ENCODE measurements at regions of chr1 and their contacts with region 1.

Region 1: DNA sequence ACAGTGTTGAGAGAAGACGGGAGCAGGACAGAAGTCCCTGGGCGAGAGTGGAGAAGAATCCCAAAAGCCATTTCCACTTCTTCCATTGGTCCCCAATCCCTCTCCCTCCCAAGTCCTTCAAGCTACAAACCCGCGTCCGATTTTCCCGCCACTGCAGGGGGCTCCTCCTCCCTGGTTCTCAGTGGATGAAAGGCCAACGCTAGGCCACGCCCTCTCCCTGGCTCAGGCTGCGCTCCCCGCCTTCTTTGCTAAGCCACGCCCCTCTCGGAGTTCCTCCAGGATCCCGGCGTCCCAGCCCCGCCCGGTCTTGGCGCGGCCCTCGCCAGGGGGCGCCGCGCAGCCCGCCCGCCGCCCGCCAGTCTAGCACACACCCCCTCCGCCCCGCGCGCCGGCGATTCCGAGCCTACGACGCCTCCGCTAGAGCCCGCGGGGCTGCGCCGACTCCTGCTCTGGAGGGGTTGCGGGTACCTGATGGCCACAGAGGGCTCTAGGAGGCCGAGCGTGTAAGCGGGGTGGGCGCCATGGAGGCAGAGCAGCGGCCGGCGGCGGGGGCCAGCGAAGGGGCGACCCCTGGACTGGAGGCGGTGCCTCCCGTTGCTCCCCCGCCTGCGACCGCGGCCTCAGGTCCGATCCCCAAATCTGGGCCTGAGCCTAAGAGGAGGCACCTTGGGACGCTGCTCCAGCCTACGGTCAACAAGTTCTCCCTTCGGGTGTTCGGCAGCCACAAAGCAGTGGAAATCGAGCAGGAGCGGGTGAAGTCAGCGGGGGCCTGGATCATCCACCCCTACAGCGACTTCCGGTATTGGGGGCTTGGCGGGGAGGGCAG is at the start of gene HCN3:
- DNase-seq: peak; percentile 93
- ATAC-seq: peak; percentile 72
- H3K4me3 Mint-ChIP-seq: peak within 1 kb of the TSS; percentile 79
- H3K27ac Mint-ChIP-seq: no peak within 1 kb of the TSS
- H3K4me1 Mint-ChIP-seq: peaks cover 36% of the 10 kb centered on the region
- H3K27me3 Mint-ChIP-seq: no peaks in the 10 kb centered on the region
- CTCF ChIP-seq: no peak
- total RNA-seq, gene HCN3: 2.7 TPM in 2 replicates

Region 2: GRCh38 chr1:155208541-155209311 is 68.6 kb before region 1 on chr1 and contains the start of gene MTX1:
- CTCF ChIA-PET with region 1: no interaction called
- POLR2A ChIA-PET with region 1: interaction called, 17 read pairs
- intact Hi-C with region 1: no loop called
- DNase-seq: peak; percentile 85
- ATAC-seq: peak; percentile 81
- H3K4me3 Mint-ChIP-seq: peak within 1 kb of the TSS; percentile 85
- H3K27ac Mint-ChIP-seq: peak within 1 kb of the TSS; percentile 91
- H3K4me1 Mint-ChIP-seq: peaks cover 20% of the 10 kb centered on the region
- H3K27me3 Mint-ChIP-seq: no peaks in the 10 kb centered on the region
- CTCF ChIP-seq: no peak
- total RNA-seq, gene MTX1: 36.7 and 38.2 TPM in 2 replicates

Region 3: DNA sequence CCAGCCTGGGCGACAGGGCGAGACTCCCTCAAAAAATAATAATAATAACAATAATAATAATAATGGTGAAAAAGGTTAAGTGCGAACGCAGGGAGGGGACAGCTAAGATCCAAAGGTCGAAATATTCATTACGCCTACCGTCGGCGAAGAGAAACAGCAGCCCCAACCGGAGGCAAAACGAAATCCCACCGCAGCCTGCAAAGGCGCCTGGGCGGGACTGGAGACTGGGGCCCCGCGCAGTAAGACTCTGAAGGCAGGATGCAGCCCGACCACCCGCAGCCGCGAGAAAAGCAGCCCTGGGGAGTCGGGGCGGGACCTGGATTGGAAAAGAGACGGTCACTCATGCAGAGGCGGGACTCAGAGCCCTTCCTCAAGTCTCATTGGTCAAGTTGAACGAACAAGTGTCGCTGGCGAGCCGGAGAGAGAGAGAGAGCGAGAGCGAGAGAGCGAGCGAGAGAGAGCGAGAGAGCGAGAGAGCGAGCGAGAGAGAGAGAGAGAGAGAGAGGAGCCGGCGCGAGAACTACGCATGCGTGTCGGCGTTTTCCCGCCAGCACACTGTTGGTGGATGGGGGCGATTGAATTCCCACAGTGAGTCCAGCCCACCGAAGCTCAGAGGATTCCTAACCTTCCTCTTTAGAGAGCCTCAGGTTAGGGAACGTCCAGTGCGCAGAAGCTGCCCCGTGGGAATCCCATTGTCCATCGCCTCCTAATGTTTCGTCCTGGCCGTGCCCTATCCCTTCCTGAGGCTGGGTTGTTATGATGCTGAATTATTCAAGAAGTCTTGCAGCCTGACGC is 32.7 kb before region 1 on chr1:
- CTCF ChIA-PET with region 1: interaction called, 16 read pairs
- POLR2A ChIA-PET with region 1: interaction called, 31 read pairs
- intact Hi-C with region 1: loop called (anchors 5 kb)
- DNase-seq: peak; percentile 87
- ATAC-seq: peak; percentile 97
- H3K4me3 Mint-ChIP-seq: peak overlapping the region; percentile 85
- H3K27ac Mint-ChIP-seq: peak overlapping the region; percentile 96
- H3K4me1 Mint-ChIP-seq: peaks cover 39% of the 10 kb centered on the region
- H3K27me3 Mint-ChIP-seq: peaks cover 2% of the 10 kb centered on the region
- CTCF ChIP-seq: no peak

Region 4: GRCh38 chr1:155261852-155262673 is 15.2 kb before region 1 on chr1 and contains the start of gene SCAMP3:
- CTCF ChIA-PET with region 1: interaction called, 3 read pairs
- POLR2A ChIA-PET with region 1: interaction called, 52 read pairs
- intact Hi-C with region 1: loop called (anchors 1 kb)
- DNase-seq: peak; percentile 71
- ATAC-seq: peak; percentile 95
- H3K4me3 Mint-ChIP-seq: peak within 1 kb of the TSS; percentile 98
- H3K27ac Mint-ChIP-seq: peak within 1 kb of the TSS; percentile 92
- H3K4me1 Mint-ChIP-seq: peaks cover 33% of the 10 kb centered on the region
- H3K27me3 Mint-ChIP-seq: no peaks in the 10 kb centered on the region
- CTCF ChIP-seq: no peak
- total RNA-seq, gene SCAMP3: 71.8 and 78.6 TPM in 2 replicates

Region 5: DNA sequence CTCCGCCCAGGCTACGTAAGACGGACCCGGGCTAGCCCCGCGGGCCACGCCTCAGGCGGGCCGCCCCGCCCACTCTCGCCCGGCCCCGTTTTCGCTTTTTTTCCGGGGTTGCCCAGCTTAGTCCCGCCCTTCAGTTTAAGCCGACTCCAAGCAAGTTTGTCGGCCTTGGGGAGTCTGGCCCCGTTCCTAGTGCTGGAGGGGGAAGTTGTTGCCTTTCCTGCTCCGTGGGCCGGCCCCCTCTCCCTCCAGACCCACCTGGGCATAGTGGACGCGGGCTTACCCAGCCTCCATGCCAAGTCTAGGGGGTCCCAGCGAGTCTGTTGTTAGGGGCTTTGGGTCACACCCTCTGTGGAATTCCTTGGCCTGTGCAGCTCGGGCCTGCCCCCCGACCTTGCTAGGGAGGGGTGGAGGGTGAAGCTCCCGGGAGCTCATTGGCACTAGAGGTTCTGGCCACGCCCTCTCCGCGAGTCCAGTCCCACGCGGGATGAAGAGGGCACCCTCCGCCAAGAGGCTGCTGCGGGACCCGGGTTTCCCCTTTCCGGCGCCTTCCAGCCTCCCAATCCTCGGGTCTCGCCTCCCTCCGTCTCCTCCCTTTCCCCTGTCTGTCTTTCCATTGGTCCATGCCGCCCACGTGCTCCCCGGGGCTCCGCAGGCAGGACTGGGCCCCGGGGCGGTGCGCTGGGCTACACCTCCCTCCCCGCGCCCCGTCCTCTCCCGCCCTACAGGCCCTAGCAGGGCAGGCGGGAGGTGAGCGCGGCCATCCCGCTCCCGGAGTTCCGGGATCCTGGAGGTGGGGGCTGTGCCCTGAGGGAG is 46.7 kb after region 1 on chr1:
- CTCF ChIA-PET with region 1: interaction called, 21 read pairs
- POLR2A ChIA-PET with region 1: interaction called, 39 read pairs
- intact Hi-C with region 1: loop called (anchors 1 kb)
- DNase-seq: peak; percentile 81
- ATAC-seq: peak; percentile 78
- H3K4me3 Mint-ChIP-seq: peak overlapping the region; percentile 88
- H3K27ac Mint-ChIP-seq: peak overlapping the region; percentile 78
- H3K4me1 Mint-ChIP-seq: peaks cover 38% of the 10 kb centered on the region
- H3K27me3 Mint-ChIP-seq: no peaks in the 10 kb centered on the region
- CTCF ChIP-seq: no peak

Region 6: GRCh38 chr1:155504207-155504606 is 226.9 kb after region 1 on chr1:
- CTCF ChIA-PET with region 1: no interaction called
- POLR2A ChIA-PET with region 1: no interaction called
- intact Hi-C with region 1: loop called (anchors 1 kb)
- DNase-seq: no peak
- ATAC-seq: peak; percentile 62
- H3K4me3 Mint-ChIP-seq: no peak overlapping the region
- H3K27ac Mint-ChIP-seq: peak overlapping the region; percentile 30
- H3K4me1 Mint-ChIP-seq: peaks cover 54% of the 10 kb centered on the region
- H3K27me3 Mint-ChIP-seq: no peaks in the 10 kb centered on the region
- CTCF ChIP-seq: no peak